Ascending aorta (tissue), 2 donors: ENCODE measurements at regions of chr1 and their contacts with region 1.

Region 1: DNA sequence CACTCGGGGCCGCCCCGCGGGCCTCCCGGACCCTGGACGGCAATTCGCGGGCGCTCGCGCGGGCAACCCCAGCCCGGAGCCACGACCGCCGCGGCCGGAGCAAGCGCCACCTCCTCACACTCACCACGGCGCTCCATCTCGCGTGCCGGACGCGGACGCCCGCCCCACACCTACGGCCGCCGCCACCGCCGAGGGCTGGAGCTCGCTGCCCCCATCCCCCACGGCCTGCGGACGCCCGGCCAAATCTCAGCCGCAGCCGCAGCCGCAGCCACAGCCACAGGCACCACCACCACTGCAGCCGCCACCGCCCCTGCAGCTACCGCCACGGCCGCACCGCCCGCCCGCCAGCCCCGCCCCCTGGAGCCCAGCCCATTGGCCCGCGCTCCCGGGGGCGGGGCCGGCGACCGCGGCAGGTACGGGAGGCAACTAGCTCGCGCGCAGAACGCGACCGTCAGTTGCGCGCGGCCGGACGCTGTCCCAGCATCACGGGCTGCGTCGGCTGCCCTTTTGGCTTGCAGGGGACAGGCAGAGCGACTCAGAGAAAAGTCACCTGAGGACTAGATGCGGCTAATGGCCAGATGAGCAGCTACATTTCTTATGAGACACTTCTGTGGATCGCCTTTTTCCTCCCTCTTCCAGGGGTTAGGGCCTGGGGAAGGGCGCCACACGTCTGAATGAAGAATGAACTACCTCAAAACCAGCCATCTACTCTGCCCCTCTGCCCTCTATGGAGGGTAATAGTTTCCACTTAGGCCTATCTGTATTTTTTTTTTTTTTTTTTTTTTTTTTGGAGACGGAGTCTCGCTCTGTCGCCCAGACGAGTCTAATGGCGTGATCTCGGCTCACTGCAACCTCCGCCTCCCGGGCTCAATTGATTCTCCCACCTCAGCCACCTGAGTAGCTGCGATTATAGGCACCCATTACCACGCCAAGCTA is at the start of gene ARHGAP29:
- DNase-seq: peak; percentile 14 to 86
- H3K4me3 ChIP-seq: peak within 1 kb of the TSS; percentile 63 to 90
- H3K27ac ChIP-seq: peak within 1 kb of the TSS; percentile 81 to 86
- H3K4me1 ChIP-seq: no peaks in the 10 kb centered on the region
- H3K27me3 ChIP-seq: no peaks in the 10 kb centered on the region
- CTCF ChIP-seq: no peak
- total RNA-seq, gene ARHGAP29: 35.1 TPM

Region 2: DNA sequence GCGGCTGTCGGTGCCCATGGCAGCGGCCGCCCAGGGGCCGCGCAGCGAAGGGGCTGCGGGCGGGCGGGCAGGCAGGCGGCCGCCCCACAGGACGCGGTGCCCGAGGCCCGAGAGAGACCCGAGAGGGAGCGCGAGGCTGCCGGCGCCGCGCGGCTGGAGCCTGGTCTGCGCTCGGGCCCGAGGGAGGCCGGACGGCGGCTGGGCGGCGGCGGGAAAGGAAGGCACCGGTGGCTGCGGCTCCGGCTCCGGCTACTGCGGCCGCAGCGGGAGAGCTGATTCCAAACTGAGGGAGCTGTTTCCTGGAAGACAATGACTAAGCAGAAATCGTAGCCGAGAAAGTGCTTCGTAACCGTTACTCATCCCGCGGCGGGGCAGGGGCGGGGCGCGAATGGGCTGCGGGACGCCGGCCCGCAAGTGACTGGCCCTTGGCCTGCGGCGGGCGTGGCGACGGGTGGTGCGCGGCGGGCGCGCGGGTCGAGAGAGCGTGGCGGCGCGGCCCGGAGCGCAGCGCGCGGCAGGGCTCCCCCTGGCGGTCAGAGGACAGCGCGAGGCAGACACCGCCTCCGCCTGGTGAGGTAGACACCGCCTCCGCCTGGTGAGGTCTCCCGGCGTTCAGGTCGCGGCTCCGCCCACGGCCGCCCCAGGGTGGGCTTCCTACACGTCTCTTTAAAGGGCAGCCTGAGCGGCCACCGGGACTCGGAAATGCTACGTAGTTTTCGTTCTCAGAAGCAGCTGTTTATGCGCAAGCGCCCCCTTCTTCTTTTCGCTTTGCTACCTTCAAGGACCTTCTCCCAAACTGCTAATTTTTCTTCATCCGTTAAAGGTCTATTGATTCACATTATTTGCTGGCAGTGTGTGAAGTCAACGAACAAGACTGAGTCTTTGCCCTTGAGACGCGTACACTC is 328.2 kb before region 1 on chr1 and contains the start of gene GCLM:
- intact Hi-C with region 1: loop called (anchors 2 kb)
- DNase-seq: peak; percentile 79 to 97
- H3K4me3 ChIP-seq: peak within 1 kb of the TSS; percentile 92 to 96
- H3K27ac ChIP-seq: peak within 1 kb of the TSS; percentile 82 to 89
- H3K4me1 ChIP-seq: peaks cover 0 to 7% of the 10 kb centered on the region in 2 donors
- H3K27me3 ChIP-seq: no peaks in the 10 kb centered on the region
- CTCF ChIP-seq: peak; percentile 67 to 95 (median 80)
- total RNA-seq, gene GCLM: 3.3 TPM

Region 3: GRCh38 chr1:94061513-94062443 is 175.8 kb before region 1 on chr1:
- intact Hi-C with region 1: loop called (anchors 2 kb)
- DNase-seq: peak in 1 of 2 donors; percentile 85
- H3K4me3 ChIP-seq: no peak overlapping the region
- H3K27ac ChIP-seq: peak overlapping the region in 1 of 2 donors; percentile 18
- H3K4me1 ChIP-seq: peaks cover 0 to 6% of the 10 kb centered on the region in 2 donors
- H3K27me3 ChIP-seq: no peaks in the 10 kb centered on the region
- CTCF ChIP-seq: peak; percentile 84 to 93 (median 86)

Region 4: GRCh38 chr1:94329986-94330385 is 92.4 kb after region 1 on chr1:
- intact Hi-C with region 1: loop called (anchors 2 kb)
- DNase-seq: no peak
- H3K4me3 ChIP-seq: no peak overlapping the region
- H3K27ac ChIP-seq: no peak overlapping the region
- H3K4me1 ChIP-seq: peaks cover 0 to 14% of the 10 kb centered on the region in 2 donors
- H3K27me3 ChIP-seq: no peaks in the 10 kb centered on the region
- CTCF ChIP-seq: peak; percentile 48 to 57 (median 49)

Region 5: GRCh38 chr1:94417978-94418663 is 180.6 kb after region 1 on chr1 and contains the start of gene ABCD3:
- intact Hi-C with region 1: loop called (anchors 2 kb)
- DNase-seq: peak; percentile 90 to 99
- H3K4me3 ChIP-seq: peak within 1 kb of the TSS; percentile 86 to 94
- H3K27ac ChIP-seq: peak within 1 kb of the TSS; percentile 86 to 90
- H3K4me1 ChIP-seq: peaks cover 0 to 11% of the 10 kb centered on the region in 2 donors
- H3K27me3 ChIP-seq: no peaks in the 10 kb centered on the region
- CTCF ChIP-seq: no peak
- total RNA-seq, gene ABCD3: 8.8 TPM